AG04449 (cell line): ENCODE measurements at regions of chr7 and their contacts with region 1.

Region 1: GRCh38 chr7:150404805-150405583 is 25.9 kb downstream of the ZNF775 start:
- DNase-seq: peak; percentile 37
- H3K4me3 ChIP-seq: peak overlapping the region; percentile 68
- CTCF ChIP-seq: peak; percentile 25

Region 2: GRCh38 chr7:150356265-150356897 is 48.6 kb before region 1 on chr7:
- CTCF ChIA-PET with region 1: interaction called, 39 read pairs
- POLR2A ChIA-PET with region 1: no interaction called
- DNase-seq: no peak
- H3K4me3 ChIP-seq: no peak overlapping the region
- CTCF ChIP-seq: peak; percentile 49

Region 3: GRCh38 chr7:150368096-150368883 is 36.7 kb before region 1 on chr7 and contains the start of gene REPIN1:
- CTCF ChIA-PET with region 1: interaction called, 28 read pairs
- POLR2A ChIA-PET with region 1: interaction called, 10 read pairs
- DNase-seq: no peak
- H3K4me3 ChIP-seq: peak within 1 kb of the TSS; percentile 89
- CTCF ChIP-seq: no peak

Region 4: GRCh38 chr7:150420987-150421674 is 16.1 kb after region 1 on chr7:
- CTCF ChIA-PET with region 1: interaction called, 13 read pairs
- POLR2A ChIA-PET with region 1: no interaction called
- DNase-seq: no peak
- H3K4me3 ChIP-seq: no peak overlapping the region
- CTCF ChIP-seq: peak; percentile 91